Caco-2 (cell line): ENCODE measurements at regions of chr5 and their contacts with region 1.

Region 1: DNA sequence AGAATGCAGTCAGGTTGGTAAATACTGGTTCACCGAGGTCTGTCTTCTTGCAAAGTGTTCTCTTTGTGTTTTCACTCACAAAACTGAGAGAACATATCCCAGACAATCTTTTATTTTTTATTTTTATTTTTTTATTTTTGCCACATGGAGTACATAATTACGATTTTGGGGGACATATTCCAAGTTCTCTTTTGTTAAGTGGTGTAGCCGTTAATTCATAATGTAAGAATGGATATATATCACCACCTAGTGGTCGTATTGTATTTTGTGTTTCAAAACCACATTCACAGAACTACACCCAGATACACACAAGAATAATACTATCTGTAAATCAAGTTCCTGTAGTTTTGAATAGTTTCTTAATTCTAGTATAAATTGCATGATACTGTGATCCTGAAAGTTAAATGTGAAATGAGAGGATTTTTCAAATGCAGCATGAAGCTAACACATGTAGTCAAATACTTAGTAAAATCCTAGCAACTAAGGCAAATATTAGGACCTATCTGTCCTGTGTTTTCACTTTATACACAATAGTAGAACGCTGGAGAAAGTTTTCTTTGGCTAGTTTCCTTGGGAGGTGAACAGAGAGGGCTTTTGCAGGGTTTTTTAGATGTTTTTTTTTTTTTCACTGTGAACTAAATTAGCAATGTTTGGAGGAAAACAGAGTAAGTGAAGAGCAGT is 92.7 kb downstream of the VCAN start:
- DNase-seq: peak in 1 of 2 experiments; percentile 24
- H3K4me3 ChIP-seq: no peak overlapping the region
- H3K4me3 Mint-ChIP-seq: peak overlapping the region; percentile 52
- H3K27ac Mint-ChIP-seq: peak overlapping the region; percentile 50
- H3K4me1 ChIP-seq: peaks cover 26% of the 10 kb centered on the region
- H3K4me1 Mint-ChIP-seq: peaks cover 20% of the 10 kb centered on the region
- H3K27me3 ChIP-seq: no peaks in the 10 kb centered on the region
- H3K27me3 Mint-ChIP-seq: no peaks in the 10 kb centered on the region
- CTCF ChIP-seq: peak; percentile 46 to 69

Region 2: GRCh38 chr5:82312373-82312856 is 1251.8 kb before region 1 on chr5:
- CTCF ChIA-PET with region 1: no interaction called
- POLR2A ChIA-PET with region 1: no interaction called
- intact Hi-C with region 1: loop called (anchors 2 kb)
- DNase-seq: peak; percentile 63 to 65
- H3K4me3 ChIP-seq: no peak overlapping the region
- H3K4me3 Mint-ChIP-seq: no peak overlapping the region
- H3K27ac Mint-ChIP-seq: no peak overlapping the region
- H3K4me1 ChIP-seq: no peaks in the 10 kb centered on the region
- H3K4me1 Mint-ChIP-seq: peaks cover 11% of the 10 kb centered on the region
- H3K27me3 ChIP-seq: no peaks in the 10 kb centered on the region
- H3K27me3 Mint-ChIP-seq: no peaks in the 10 kb centered on the region
- CTCF ChIP-seq: peak; percentile 76 to 83

Region 3: GRCh38 chr5:82641331-82642003 is 922.7 kb before region 1 on chr5:
- CTCF ChIA-PET with region 1: no interaction called
- POLR2A ChIA-PET with region 1: no interaction called
- intact Hi-C with region 1: loop called (anchors 1 kb)
- DNase-seq: peak in 1 of 2 experiments; percentile 64
- H3K4me3 ChIP-seq: no peak overlapping the region
- H3K4me3 Mint-ChIP-seq: no peak overlapping the region
- H3K27ac Mint-ChIP-seq: no peak overlapping the region
- H3K4me1 ChIP-seq: peaks cover under 1% of the 10 kb centered on the region
- H3K4me1 Mint-ChIP-seq: peaks cover 4% of the 10 kb centered on the region
- H3K27me3 ChIP-seq: no peaks in the 10 kb centered on the region
- H3K27me3 Mint-ChIP-seq: no peaks in the 10 kb centered on the region
- CTCF ChIP-seq: peak; percentile 65 to 68

Region 4: DNA sequence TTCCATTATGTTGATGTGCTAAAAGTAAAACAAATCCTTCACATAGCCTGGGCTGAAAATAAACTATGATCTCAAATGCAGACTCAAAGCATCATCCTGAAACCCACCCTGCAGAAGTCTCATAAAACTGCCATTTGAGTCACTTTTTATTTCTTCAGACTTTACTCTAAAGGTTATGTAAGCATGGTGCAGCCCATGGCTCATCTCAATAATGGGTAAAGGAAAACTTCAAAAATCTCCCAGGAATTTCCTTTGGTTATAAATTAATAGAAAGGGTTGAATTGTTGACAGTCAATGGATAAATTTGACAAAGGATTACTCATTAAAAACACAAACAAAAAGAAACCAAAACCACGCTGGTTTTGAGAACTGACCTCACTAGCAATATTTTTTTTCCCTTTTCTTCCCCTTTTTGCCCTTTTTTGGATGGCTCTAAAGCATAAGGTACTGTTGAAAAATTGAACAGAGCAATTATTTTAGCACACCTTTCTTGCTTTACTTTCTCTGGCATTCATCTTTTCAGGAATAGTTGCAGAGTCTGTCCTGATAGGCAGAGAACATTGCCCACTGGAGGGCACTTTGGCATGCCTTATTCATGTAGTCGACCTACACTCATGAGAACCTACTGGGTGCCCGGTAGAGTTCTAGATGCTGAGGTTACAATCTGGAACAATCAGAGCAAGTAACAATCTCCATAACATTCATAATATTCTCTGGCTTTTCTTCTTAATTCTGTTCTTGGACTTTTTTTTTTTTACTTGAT is 678.4 kb before region 1 on chr5:
- CTCF ChIA-PET with region 1: no interaction called
- POLR2A ChIA-PET with region 1: no interaction called
- intact Hi-C with region 1: loop called (anchors 5 kb)
- DNase-seq: no peak
- H3K4me3 ChIP-seq: no peak overlapping the region
- H3K4me3 Mint-ChIP-seq: no peak overlapping the region
- H3K27ac Mint-ChIP-seq: no peak overlapping the region
- H3K4me1 ChIP-seq: no peaks in the 10 kb centered on the region
- H3K4me1 Mint-ChIP-seq: peaks cover 6% of the 10 kb centered on the region
- H3K27me3 ChIP-seq: no peaks in the 10 kb centered on the region
- H3K27me3 Mint-ChIP-seq: no peaks in the 10 kb centered on the region
- CTCF ChIP-seq: peak in 1 of 2 experiments; percentile 21

Region 5: GRCh38 chr5:83430130-83431010 is 133.8 kb before region 1 on chr5:
- CTCF ChIA-PET with region 1: no interaction called
- POLR2A ChIA-PET with region 1: no interaction called
- intact Hi-C with region 1: loop called (anchors 2 kb)
- DNase-seq: peak; percentile 58 to 73
- H3K4me3 ChIP-seq: no peak overlapping the region
- H3K4me3 Mint-ChIP-seq: no peak overlapping the region
- H3K27ac Mint-ChIP-seq: no peak overlapping the region
- H3K4me1 ChIP-seq: 0 out of 2 replicates have a peak, but pooled peaks cover 4% of the 10 kb centered on the region
- H3K4me1 Mint-ChIP-seq: no peaks in the 10 kb centered on the region
- H3K27me3 ChIP-seq: no peaks in the 10 kb centered on the region
- H3K27me3 Mint-ChIP-seq: peaks cover 3% of the 10 kb centered on the region
- CTCF ChIP-seq: peak; percentile 88 to 95

Region 6: GRCh38 chr5:83488271-83488670 is 75.9 kb before region 1 on chr5:
- CTCF ChIA-PET with region 1: no interaction called
- POLR2A ChIA-PET with region 1: no interaction called
- intact Hi-C with region 1: no loop called
- DNase-seq: no peak
- H3K4me3 ChIP-seq: no peak overlapping the region
- H3K4me3 Mint-ChIP-seq: no peak overlapping the region
- H3K27ac Mint-ChIP-seq: no peak overlapping the region
- H3K4me1 ChIP-seq: no peaks in the 10 kb centered on the region
- H3K4me1 Mint-ChIP-seq: no peaks in the 10 kb centered on the region
- H3K27me3 ChIP-seq: no peaks in the 10 kb centered on the region
- H3K27me3 Mint-ChIP-seq: no peaks in the 10 kb centered on the region
- CTCF ChIP-seq: no peak

Region 7: GRCh38 chr5:83577036-83577636 is 12.9 kb after region 1 on chr5:
- CTCF ChIA-PET with region 1: no interaction called
- POLR2A ChIA-PET with region 1: no interaction called
- intact Hi-C with region 1: loop called (anchors 1 kb)
- DNase-seq: peak; percentile 82 to 89
- H3K4me3 ChIP-seq: no peak overlapping the region
- H3K4me3 Mint-ChIP-seq: peak overlapping the region; percentile 65
- H3K27ac Mint-ChIP-seq: peak overlapping the region; percentile 68
- H3K4me1 ChIP-seq: peaks cover 16% of the 10 kb centered on the region
- H3K4me1 Mint-ChIP-seq: peaks cover 20% of the 10 kb centered on the region
- H3K27me3 ChIP-seq: no peaks in the 10 kb centered on the region
- H3K27me3 Mint-ChIP-seq: no peaks in the 10 kb centered on the region
- CTCF ChIP-seq: no peak